Heart right ventricle (tissue), 16 donors: ENCODE measurements at regions of chr3 and their contacts with region 1.

Region 1: DNA sequence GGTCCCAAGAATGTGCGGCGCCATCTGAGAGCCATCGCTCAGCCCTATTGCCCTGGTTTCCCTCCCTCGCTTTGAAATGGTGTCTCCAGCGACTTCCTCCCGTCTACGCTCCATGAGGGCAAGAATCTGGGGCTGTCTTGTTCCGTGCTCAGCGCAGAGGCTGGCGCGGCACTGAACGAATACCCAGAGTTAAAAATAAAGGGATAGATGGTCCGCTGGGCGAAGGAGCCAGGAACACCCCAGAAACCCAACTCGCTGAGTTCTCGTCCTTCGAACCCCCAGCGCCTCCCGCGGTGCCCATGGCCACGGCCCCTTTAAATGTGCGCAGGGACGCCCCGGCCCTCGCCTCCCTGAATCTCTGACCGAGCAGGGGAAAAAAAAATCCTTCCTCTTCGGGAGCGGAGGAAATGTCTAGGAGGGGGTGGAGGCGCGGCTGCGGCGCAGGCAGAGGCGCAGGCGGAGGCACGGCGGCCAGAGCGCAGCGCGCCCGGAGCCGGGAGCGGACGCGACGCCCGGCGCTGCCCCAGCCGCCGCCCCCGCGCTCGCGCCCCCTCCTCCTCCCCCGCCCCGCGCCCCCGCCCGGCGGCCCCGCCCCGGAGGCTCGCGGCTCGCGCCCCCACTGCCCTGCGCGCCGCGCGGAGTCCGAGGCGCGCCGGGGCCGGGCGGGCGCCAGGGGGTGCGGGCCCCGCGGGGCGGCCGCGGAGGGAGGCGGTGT is 8.5 kb upstream of the FGD5 start:
- DNase-seq: peak; percentile 59 to 69
- ATAC-seq: peak; percentile 62 to 82 (median 72)
- H3K4me3 ChIP-seq: peak overlapping the region; percentile 45 to 84 (median 78)
- H3K27ac ChIP-seq: peak overlapping the region; percentile 82 to 97 (median 94)
- H3K4me1 ChIP-seq: peaks cover 5 to 75% (median 54%) of the 10 kb centered on the region in 9 donors
- H3K27me3 ChIP-seq: peaks cover 4 to 67% (median 31%) of the 10 kb centered on the region in 7 donors
- CTCF ChIP-seq: no peak

Region 2: DNA sequence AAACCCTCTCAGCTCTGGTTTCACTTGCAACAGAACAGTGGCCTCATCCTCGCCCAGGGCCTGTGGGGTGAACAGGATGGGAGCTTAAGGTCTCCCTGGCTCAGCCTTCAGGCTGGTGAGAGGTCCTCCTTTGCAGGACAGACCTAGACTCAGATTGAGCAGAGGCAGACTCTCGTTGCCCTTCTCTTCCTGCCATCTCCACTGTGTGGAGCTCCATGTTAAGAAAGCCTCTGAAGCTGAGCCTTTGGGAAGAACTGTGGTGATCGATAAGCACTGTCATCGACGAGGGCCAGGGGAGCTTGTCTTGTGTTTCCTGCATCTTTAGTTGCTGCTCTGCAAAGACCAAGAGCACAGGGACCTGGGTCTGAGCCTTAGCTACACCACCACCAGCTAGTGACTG is 232.3 kb before region 1 on chr3:
- intact Hi-C with region 1: no loop called
- DNase-seq: no peak
- ATAC-seq: no peak
- H3K4me3 ChIP-seq: no peak overlapping the region
- H3K27ac ChIP-seq: no peak overlapping the region
- H3K4me1 ChIP-seq: no peaks in the 10 kb centered on the region
- H3K27me3 ChIP-seq: peaks cover 0 to 45% (median 11%) of the 10 kb centered on the region in 7 donors
- CTCF ChIP-seq: no peak

Region 3: DNA sequence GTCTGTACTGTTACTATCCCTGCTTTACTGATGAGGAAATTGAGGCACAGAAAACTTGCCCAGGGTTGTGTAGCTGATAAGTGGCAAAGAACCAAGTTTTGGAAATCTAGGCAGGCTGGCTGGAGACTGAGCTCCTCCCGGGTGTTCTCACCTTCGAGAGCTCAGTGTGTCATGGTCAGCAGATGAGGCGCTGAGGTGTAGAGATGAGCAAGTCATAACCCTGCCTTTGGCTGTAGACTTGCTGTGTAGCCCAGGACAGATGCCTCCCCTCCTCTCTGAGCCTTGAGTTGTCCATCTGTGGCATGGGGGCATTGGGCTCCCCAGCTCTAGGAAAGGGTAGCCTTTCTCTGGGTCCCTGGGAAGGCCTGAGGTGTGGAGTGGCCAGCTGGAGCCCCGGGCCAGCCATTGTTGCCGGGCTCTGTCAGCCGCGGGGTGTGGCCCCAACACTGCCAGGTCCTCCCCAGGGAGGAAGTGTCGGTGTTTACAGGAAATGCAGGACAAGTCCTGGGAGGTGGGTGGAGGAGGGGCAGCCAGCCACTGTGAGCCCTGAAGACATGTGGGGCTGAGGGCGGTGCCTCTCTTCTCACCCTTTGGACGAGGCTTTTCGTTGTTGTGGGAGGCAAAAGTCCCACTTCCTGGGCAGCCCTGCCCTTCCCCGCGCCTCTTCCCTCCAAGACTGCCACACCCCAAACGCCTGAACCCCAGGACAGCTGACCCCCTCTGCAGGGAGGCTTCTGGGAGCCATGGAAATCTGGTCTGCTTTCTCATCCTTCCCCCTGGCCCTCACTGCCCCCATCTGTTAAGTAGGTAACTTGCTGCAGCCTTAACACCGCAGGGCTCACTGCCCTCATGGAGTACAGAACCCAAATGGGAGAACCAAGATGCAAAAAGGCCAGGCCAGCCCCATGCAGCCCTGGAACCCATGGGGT is 37.6 kb after region 1 on chr3:
- intact Hi-C with region 1: loop called in 1 of 10 experiments (anchors 5 kb)
- DNase-seq: peak; percentile 74 to 84
- ATAC-seq: peak; percentile 73 to 93 (median 86)
- H3K4me3 ChIP-seq: no peak overlapping the region
- H3K27ac ChIP-seq: peak overlapping the region; percentile 20 to 86 (median 68)
- H3K4me1 ChIP-seq: peaks cover 17 to 82% (median 52%) of the 10 kb centered on the region in 9 donors
- H3K27me3 ChIP-seq: peaks cover 0 to 8% (median 0%) of the 10 kb centered on the region in 7 donors
- CTCF ChIP-seq: peak in 1 of 9 donors; percentile 19

Region 4: DNA sequence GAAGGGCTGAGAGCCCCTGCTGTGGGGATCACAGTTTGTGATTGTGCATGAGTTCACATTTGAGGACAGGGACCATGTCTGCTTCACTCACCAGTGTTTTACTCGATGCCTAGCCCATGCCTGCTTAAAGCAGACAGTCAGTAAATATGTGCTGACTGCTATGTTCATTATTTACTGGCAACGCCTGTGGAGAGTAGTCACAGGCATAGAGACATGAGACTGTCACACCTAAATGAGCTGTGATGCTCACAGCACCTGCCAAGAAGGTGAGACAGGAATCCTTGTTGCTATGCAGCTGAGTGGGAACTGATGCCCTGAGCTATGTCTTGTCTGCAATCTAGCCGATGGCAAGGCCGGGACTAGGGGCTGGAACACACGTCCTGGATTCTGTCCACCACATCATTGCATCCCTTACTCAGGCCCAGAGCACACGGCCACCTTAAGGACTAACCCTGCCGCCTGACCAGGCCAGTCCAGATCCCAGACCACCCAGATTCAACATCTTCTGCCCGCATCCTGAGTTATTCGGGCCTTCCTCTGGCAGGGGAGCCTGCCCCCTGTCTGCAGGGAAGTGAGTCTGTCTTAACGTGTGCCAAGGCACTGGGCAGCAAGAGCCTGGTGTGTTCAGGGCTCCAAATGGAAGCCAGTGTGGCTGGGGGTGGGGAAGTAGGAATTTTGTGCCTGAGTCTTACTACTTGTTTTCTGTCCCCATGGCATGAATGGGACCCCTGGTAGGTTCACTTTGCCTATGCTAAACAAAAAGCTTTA is 53.3 kb after region 1 on chr3:
- intact Hi-C with region 1: loop called in 1 of 10 experiments (anchors 5 kb)
- DNase-seq: no peak
- ATAC-seq: no peak
- H3K4me3 ChIP-seq: no peak overlapping the region
- H3K27ac ChIP-seq: peak overlapping the region in 8 of 10 donors; percentile 17 to 86 (median 32)
- H3K4me1 ChIP-seq: peaks cover 13 to 54% (median 37%) of the 10 kb centered on the region in 9 donors
- H3K27me3 ChIP-seq: peaks cover 0 to 5% (median 0%) of the 10 kb centered on the region in 7 donors
- CTCF ChIP-seq: peak in 7 of 9 donors; percentile 23 to 48 (median 35)

Region 5: DNA sequence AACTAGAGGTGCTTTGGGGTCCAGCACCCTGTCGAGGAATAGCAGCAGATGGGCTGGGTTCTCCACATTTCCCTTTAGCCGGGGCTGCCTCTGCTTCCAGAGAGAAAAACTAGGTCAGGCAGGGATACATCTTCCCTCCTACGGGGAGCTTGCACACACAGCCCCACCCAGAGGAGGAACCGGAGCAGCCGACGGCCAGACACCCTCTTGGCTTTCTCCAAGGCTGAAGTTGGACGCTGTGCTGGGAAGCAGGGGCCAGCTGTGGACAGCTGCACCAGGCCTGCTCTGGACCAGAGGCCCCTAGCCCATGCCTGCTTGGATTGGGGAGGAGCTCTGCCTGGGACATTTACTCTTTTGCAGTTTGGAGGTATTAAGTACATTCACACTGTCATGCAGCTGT is 92.5 kb after region 1 on chr3:
- intact Hi-C with region 1: loop called in 1 of 10 experiments (anchors 5 kb)
- DNase-seq: peak; percentile 66 to 70
- ATAC-seq: peak; percentile 86 to 94 (median 92)
- H3K4me3 ChIP-seq: no peak overlapping the region
- H3K27ac ChIP-seq: peak overlapping the region in 3 of 10 donors; percentile 6 to 48 (median 15)
- H3K4me1 ChIP-seq: peaks cover 0 to 30% (median 11%) of the 10 kb centered on the region in 9 donors
- H3K27me3 ChIP-seq: peaks cover 0 to 22% (median 0%) of the 10 kb centered on the region in 7 donors
- CTCF ChIP-seq: peak in 4 of 9 donors; percentile 17 to 40 (median 28)